Panc1 (cell line): ENCODE measurements at regions of chr1 and their contacts with region 1.

Region 1: DNA sequence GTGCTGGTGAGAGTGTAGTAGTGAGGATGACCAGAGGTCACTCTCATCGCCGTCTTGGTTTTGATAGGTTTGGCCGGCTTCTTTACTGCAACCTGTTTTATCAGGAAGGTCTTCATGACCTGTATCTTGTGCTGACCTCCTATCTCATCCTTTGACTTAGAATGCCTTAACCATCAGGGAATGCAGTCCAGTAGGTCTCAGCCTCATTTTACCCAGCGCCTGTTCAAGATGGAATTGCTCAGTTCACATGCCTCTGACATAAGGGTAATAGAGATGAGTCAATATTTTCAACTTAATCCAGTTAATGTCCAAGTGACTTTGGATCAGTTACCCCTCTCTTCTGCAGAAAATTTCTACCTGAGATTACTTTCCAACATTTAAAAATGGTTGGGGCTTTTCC is 4.6 kb downstream of the NID1 start:
- DNase-seq: no peak
- ATAC-seq: no peak
- H3K4me3 ChIP-seq: no peak overlapping the region
- H3K27ac ChIP-seq: no peak overlapping the region
- H3K4me1 ChIP-seq: peaks cover 16% of the 10 kb centered on the region
- H3K27me3 ChIP-seq: no peaks in the 10 kb centered on the region
- CTCF ChIP-seq: no peak

Region 2: GRCh38 chr1:236035681-236036101 is 24.6 kb before region 1 on chr1:
- CTCF ChIA-PET with region 1: no interaction called
- POLR2A ChIA-PET with region 1: no interaction called
- in situ Hi-C with region 1: no loop called
- intact Hi-C with region 1: loop called (anchors 2 kb)
- DNase-seq: no peak
- ATAC-seq: no peak
- H3K4me3 ChIP-seq: no peak overlapping the region
- H3K27ac ChIP-seq: no peak overlapping the region
- H3K4me1 ChIP-seq: no peaks in the 10 kb centered on the region
- H3K27me3 ChIP-seq: no peaks in the 10 kb centered on the region
- CTCF ChIP-seq: no peak